ENCODE measurements at regions of chrX and their contacts with region 1.

Region 1: DNA sequence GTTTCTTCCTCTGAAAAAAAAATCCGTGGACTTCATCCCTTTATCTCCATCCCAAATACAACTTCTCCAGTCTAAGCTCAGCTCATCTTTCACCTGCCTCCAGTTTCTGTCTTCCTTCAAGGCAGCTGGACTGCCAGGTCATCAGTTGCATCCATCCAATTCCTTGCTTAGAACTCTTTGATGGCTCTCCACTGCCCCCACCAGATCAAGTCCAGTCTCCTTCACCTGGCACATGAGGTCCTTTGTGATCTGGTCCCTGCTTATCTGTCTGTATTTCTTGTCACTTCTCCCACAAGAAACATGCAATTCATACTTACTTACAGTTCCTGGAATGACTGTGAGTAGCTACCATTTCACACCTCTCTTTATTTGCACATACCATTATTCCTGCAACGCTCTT is 33.8 kb downstream of the OTUD6A start:
- DNase-seq: no peak
- ATAC-seq: no peak
- H3K4me3 ChIP-seq: no peak overlapping the region
- H3K4me3 Mint-ChIP-seq: no peak overlapping the region
- H3K27ac ChIP-seq: no peak overlapping the region
- H3K27ac Mint-ChIP-seq: no peak overlapping the region
- H3K4me1 ChIP-seq: no peaks in the 10 kb centered on the region
- H3K4me1 Mint-ChIP-seq: peaks cover 0 to 3% (median 0%) of the 10 kb centered on the region in 7 donors
- H3K27me3 ChIP-seq: no peaks in the 10 kb centered on the region
- H3K27me3 Mint-ChIP-seq: peaks cover 3 to 8% (median 7%) of the 10 kb centered on the region in 5 donors

Region 2: GRCh38 chrX:68732906-68733493 is 1363.1 kb before region 1 on chrX:
- CTCF ChIA-PET with region 1: interaction called, 4 read pairs
- POLR2A ChIA-PET with region 1: no interaction called
- intact Hi-C with region 1: loop called in 1 of 2 experiments (anchors 5 kb)
- DNase-seq: peak; percentile 21 to 69 (median 50)
- ATAC-seq: peak; percentile 78
- H3K4me3 ChIP-seq: no peak overlapping the region
- H3K4me3 Mint-ChIP-seq: no peak overlapping the region
- H3K27ac ChIP-seq: no peak overlapping the region
- H3K27ac Mint-ChIP-seq: no peak overlapping the region
- H3K4me1 ChIP-seq: no peaks in the 10 kb centered on the region
- H3K4me1 Mint-ChIP-seq: peaks cover 0 to 2% (median 0%) of the 10 kb centered on the region in 7 donors
- H3K27me3 ChIP-seq: no peaks in the 10 kb centered on the region
- H3K27me3 Mint-ChIP-seq: peaks cover 0 to 14% (median 9%) of the 10 kb centered on the region in 5 donors

Region 3: DNA sequence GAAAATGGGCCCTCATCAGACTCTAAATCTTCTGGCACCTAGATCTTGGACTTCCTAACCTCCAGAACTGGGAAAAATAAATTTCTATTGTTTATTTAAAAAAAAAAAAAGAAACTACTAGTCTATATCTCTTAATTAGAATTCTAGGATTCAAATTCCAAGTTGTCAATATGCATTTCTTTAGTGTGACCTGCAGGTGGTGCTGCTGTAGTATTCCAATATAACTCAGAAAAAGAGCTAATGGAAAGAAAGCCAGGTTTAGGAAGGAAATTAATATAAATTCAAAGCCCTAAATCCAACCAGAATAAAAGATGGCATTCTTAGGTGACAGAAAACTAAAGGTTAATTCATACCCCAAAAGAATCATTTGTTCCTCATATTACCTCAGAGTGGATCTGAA is 671.9 kb before region 1 on chrX:
- CTCF ChIA-PET with region 1: no interaction called
- POLR2A ChIA-PET with region 1: no interaction called
- intact Hi-C with region 1: loop called in 1 of 2 experiments (anchors 5 kb)
- DNase-seq: no peak
- ATAC-seq: no peak
- H3K4me3 ChIP-seq: no peak overlapping the region
- H3K4me3 Mint-ChIP-seq: no peak overlapping the region
- H3K27ac ChIP-seq: no peak overlapping the region
- H3K27ac Mint-ChIP-seq: no peak overlapping the region
- H3K4me1 ChIP-seq: no peaks in the 10 kb centered on the region
- H3K4me1 Mint-ChIP-seq: no peaks in the 10 kb centered on the region
- H3K27me3 ChIP-seq: no peaks in the 10 kb centered on the region
- H3K27me3 Mint-ChIP-seq: peaks cover 0 to 11% (median 8%) of the 10 kb centered on the region in 5 donors

Region 4: DNA sequence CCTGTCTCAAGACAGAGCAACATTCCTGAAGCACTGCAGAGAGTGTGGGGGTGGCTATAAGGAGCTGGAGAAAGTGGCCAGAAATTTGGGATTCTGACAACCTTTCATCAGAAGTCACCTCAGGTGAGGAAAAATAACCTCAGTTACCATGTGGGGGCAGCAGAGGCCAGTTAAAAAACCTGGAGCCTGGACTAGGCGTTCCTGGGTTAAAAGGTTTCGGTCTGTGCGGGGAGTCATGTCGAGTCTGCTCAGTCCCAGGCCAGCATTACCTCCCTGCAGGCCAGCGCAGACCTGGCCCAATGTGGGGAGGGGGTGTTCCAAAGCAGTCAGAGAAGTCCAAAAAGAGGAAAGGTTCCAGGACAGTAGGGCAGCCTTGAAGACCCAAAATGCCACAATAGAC is 602.9 kb before region 1 on chrX:
- CTCF ChIA-PET with region 1: no interaction called
- POLR2A ChIA-PET with region 1: interaction called, 3 read pairs
- intact Hi-C with region 1: loop called (anchors 2 to 5 kb)
- DNase-seq: peak in 6 of 9 donors; percentile 16 to 30 (median 19)
- ATAC-seq: no peak
- H3K4me3 ChIP-seq: no peak overlapping the region
- H3K4me3 Mint-ChIP-seq: no peak overlapping the region
- H3K27ac ChIP-seq: no peak overlapping the region
- H3K27ac Mint-ChIP-seq: no peak overlapping the region
- H3K4me1 ChIP-seq: no peaks in the 10 kb centered on the region
- H3K4me1 Mint-ChIP-seq: no peaks in the 10 kb centered on the region
- H3K27me3 ChIP-seq: peaks cover 0 to 4% of the 10 kb centered on the region in 2 donors
- H3K27me3 Mint-ChIP-seq: peaks cover 2 to 24% (median 19%) of the 10 kb centered on the region in 5 donors

Region 5: GRCh38 chrX:69538321-69538876 is 557.7 kb before region 1 on chrX:
- CTCF ChIA-PET with region 1: interaction called, 8 read pairs
- POLR2A ChIA-PET with region 1: no interaction called
- intact Hi-C with region 1: loop called in 1 of 2 experiments (anchors 2 kb)
- DNase-seq: peak; percentile 30 to 79 (median 58)
- ATAC-seq: peak; percentile 90
- H3K4me3 ChIP-seq: no peak overlapping the region
- H3K4me3 Mint-ChIP-seq: peak overlapping the region in 8 of 10 donors; percentile 14 to 77 (median 61)
- H3K27ac ChIP-seq: no peak overlapping the region
- H3K27ac Mint-ChIP-seq: peak overlapping the region in 1 of 9 donors; percentile 34
- H3K4me1 ChIP-seq: peaks cover 3 to 10% of the 10 kb centered on the region in 2 donors
- H3K4me1 Mint-ChIP-seq: peaks cover 4 to 17% (median 11%) of the 10 kb centered on the region in 7 donors
- H3K27me3 ChIP-seq: no peaks in the 10 kb centered on the region
- H3K27me3 Mint-ChIP-seq: peaks cover 0 to 9% (median 6%) of the 10 kb centered on the region in 5 donors